ENCODE measurements at regions of chr6 and their contacts with region 1.

Region 1: GRCh38 chr6:27126815-27127537 is 120.5 kb upstream of the PRSS16 start:
- DNase-seq: peak; percentile 86 to 89
- H3K4me3 ChIP-seq: no peak overlapping the region
- H3K27ac ChIP-seq: peak overlapping the region in 1 of 3 donors; percentile 42
- H3K4me1 ChIP-seq: peaks cover 3 to 5% of the 10 kb centered on the region in 2 donors
- H3K27me3 ChIP-seq: no peaks in the 10 kb centered on the region
- CTCF ChIP-seq: peak; percentile 64 to 78 (median 76)
- POLR2A ChIP-seq: no peak

Region 2: GRCh38 chr6:27893059-27893835 is 766.3 kb after region 1 on chr6:
- intact Hi-C with region 1: loop called (anchors 10 kb)
- DNase-seq: peak; percentile 92
- H3K4me3 ChIP-seq: peak overlapping the region; percentile 5 to 45 (median 28)
- H3K27ac ChIP-seq: peak overlapping the region; percentile 77 to 93 (median 80)
- H3K4me1 ChIP-seq: peaks cover 0 to 13% of the 10 kb centered on the region in 2 donors
- H3K27me3 ChIP-seq: no peaks in the 10 kb centered on the region
- CTCF ChIP-seq: no peak
- POLR2A ChIP-seq: peak; percentile 86 to 97